Activated T-helper 1 cell treated with anti-CD3 and anti-CD28 coated beads, Interleukin-12 subunit alpha, Interleukin-12 subunit beta, Interleukin-2, Interleukin-4 antibody, amounts not matched to agents 30 ng/mL and 10 ng/mL and 1 ng/mL, durations not matched to agents 14 hours and 24 hours and 36 hours (primary cell): ENCODE measurements at regions of chr10 and their contacts with region 1.

Region 1: DNA sequence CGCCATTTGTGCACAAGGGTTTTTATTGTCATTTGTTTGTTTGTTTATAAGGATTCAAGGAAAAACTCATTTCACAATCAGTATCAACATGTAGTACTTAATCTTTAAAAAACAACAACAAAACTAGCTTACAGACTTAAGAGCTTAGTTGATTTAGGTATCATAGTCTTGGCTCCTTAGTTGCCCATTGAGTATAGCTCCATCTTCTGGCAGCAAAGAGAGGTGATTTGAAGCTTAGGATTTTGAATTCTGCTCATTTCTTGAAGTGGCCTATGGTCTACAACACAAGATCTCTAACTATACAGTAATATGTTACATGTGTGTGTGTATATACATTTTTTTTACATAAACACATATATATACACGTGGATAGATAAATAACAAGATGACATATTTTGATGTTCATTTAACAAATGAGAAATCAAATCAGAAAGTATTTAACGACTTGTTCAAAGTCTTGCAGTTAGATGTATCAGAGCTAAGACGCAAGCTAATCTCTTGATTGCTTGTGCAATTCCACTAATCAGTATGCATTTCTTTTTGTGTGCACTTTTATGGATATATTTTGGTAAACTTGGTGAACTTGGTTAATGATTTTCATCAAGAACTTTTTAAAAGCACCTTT is 307.3 kb downstream of the CAMK1D start:
- DNase-seq: peak; percentile 6
- H3K4me3 Mint-ChIP-seq: no peak overlapping the region
- H3K27ac Mint-ChIP-seq: peak overlapping the region; percentile 34
- H3K4me1 Mint-ChIP-seq: peaks cover 34% of the 10 kb centered on the region
- H3K27me3 Mint-ChIP-seq: no peaks in the 10 kb centered on the region

Region 2: DNA sequence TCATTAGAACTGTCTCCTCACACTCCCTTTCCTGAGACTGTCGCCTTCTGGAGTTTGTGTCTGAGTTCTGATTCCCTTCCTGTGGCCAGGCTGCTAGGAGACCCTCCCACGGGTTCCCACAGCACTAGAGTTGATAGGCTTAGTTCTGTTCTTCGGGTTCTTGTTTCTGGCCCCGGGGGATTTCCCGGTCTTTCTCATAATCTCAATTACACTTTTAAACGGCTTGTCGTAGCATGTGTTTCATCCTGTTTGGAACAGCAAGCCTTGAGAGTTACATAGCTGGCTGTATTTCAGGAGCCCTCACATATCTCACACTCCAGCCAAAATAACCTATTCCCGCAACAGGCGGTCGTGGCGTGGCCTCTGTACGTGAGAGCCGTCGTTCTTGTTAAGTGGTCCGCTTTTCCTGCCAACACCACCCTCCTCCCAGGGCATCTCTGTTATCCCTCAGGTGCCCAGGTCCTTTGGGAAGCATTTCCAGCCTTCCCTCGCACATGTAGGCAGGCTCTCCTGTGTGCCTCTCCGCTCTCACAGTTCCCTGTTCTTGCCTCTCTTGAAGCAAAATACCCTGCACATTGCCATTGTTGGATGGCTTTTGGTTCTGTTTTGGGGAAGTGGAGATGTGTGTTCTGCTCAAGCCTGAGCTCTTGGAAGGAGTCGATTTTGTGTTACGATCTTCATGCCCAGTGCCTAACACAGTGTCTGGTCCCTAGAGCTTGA is 414.7 kb before region 1 on chr10:
- intact Hi-C with region 1: loop called (anchors 1 kb)
- DNase-seq: no peak
- H3K4me3 Mint-ChIP-seq: peak overlapping the region; percentile 59
- H3K27ac Mint-ChIP-seq: peak overlapping the region; percentile 80
- H3K4me1 Mint-ChIP-seq: peaks cover 26% of the 10 kb centered on the region
- H3K27me3 Mint-ChIP-seq: no peaks in the 10 kb centered on the region

Region 3: GRCh38 chr10:12369982-12370381 is 286.6 kb before region 1 on chr10:
- intact Hi-C with region 1: loop called (anchors 5 kb)
- DNase-seq: no peak
- H3K4me3 Mint-ChIP-seq: no peak overlapping the region
- H3K27ac Mint-ChIP-seq: no peak overlapping the region
- H3K4me1 Mint-ChIP-seq: peaks cover 18% of the 10 kb centered on the region
- H3K27me3 Mint-ChIP-seq: no peaks in the 10 kb centered on the region

Region 4: GRCh38 chr10:12594448-12594944 is 62.1 kb before region 1 on chr10:
- intact Hi-C with region 1: loop called (anchors 2 kb)
- DNase-seq: peak; percentile 64
- H3K4me3 Mint-ChIP-seq: peak overlapping the region; percentile 45
- H3K27ac Mint-ChIP-seq: peak overlapping the region; percentile 90
- H3K4me1 Mint-ChIP-seq: peaks cover 95% of the 10 kb centered on the region
- H3K27me3 Mint-ChIP-seq: no peaks in the 10 kb centered on the region

Region 5: DNA sequence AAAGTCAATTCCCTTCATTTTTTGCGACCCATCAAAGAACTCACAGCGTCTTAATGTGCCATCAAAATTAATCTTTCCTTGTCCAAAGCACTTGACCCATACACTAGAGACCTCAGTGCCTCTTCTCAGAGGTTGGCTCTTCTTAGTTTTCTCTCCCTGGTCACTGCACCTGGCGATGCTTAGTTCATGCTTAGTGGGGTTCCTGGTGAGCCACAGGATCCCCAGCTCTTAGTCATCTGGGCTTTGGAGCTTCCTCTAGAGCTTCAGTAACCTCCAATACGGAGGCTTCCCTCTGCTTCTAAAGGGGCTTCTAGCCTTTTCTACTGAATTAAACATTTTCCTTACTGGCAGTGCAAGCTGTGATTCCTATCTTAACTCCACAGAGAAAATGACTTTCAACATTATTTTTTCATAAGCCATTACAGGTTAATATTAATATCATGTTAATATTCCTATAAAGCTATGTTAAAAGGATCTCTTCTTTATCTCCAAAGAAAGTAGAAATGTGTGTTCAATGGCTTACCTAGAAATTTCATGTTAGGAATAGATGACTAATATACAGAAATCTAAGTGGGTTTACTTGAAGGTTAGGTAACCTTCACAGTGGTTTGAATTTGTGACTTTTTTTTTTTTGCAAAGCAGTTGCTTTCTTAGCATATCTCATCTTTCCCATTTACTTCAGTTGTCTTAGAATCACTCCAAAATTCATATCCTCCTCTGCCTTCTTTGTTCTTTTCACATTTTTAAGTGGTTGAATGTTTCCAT is 12.1 kb before region 1 on chr10:
- intact Hi-C with region 1: loop called (anchors 1 kb)
- DNase-seq: no peak
- H3K4me3 Mint-ChIP-seq: peak overlapping the region; percentile 38
- H3K27ac Mint-ChIP-seq: peak overlapping the region; percentile 85
- H3K4me1 Mint-ChIP-seq: peaks cover 27% of the 10 kb centered on the region
- H3K27me3 Mint-ChIP-seq: peaks cover 2% of the 10 kb centered on the region